Natural killer cell (primary cell): ENCODE measurements at regions of chr2 and their contacts with region 1.

Region 1: DNA sequence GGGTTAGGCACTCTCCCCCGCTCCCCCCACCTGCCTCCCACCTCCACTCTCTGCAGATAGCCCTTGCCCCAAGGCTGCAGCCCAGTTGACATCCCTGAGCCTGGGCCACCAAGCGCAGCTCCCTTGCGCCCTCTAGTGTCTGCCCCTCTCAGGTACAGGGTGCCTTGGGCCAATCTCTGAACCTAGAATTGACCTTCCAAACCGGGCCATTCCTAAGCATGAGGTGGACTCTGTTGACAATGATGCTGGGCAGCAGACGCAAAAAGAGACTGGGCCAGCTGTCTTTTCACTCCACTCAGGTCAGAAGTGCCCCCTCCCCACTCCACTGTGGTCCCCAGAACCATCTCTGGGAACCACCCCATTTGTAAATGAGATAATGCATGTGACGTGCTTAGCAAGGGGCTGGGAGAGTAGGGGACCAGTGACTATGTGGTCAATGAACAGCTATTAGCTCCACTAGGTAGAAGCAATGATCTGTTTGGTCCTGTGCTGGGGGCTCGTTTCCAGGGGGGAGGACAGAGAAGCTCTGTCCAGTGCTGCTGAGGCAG is 43.3 kb upstream of the PLB1 start:
- DNase-seq: peak; percentile 80 to 86
- ATAC-seq: peak; percentile 85 to 98 (median 96)
- H3K4me3 ChIP-seq: no peak overlapping the region
- H3K4me3 Mint-ChIP-seq: no peak overlapping the region
- H3K27ac ChIP-seq: no peak overlapping the region
- H3K27ac Mint-ChIP-seq: peak overlapping the region in 1 of 2 donors; percentile 45
- H3K4me1 ChIP-seq: peaks cover 26% of the 10 kb centered on the region
- H3K4me1 Mint-ChIP-seq: peaks cover 14 to 30% of the 10 kb centered on the region in 2 donors
- H3K27me3 ChIP-seq: no peaks in the 10 kb centered on the region
- H3K27me3 Mint-ChIP-seq: peaks cover 0 to under 1% of the 10 kb centered on the region in 2 donors
- CTCF ChIP-seq: peak; percentile 92

Region 2: GRCh38 chr2:27703638-27704341 is 748.8 kb before region 1 on chr2:
- intact Hi-C with region 1: loop called (anchors 1 kb)
- DNase-seq: peak; percentile 73 to 92
- ATAC-seq: peak; percentile 91 to 98 (median 95)
- H3K4me3 ChIP-seq: no peak overlapping the region
- H3K4me3 Mint-ChIP-seq: no peak overlapping the region
- H3K27ac ChIP-seq: no peak overlapping the region
- H3K27ac Mint-ChIP-seq: no peak overlapping the region
- H3K4me1 ChIP-seq: peaks cover 6% of the 10 kb centered on the region
- H3K4me1 Mint-ChIP-seq: peaks cover 0 to 9% of the 10 kb centered on the region in 2 donors
- H3K27me3 ChIP-seq: no peaks in the 10 kb centered on the region
- H3K27me3 Mint-ChIP-seq: no peaks in the 10 kb centered on the region
- CTCF ChIP-seq: peak; percentile 95

Region 3: GRCh38 chr2:27754138-27754588 is 698.4 kb before region 1 on chr2:
- intact Hi-C with region 1: loop called (anchors 1 kb)
- DNase-seq: peak; percentile 43 to 73
- ATAC-seq: peak; percentile 80 to 85 (median 83)
- H3K4me3 ChIP-seq: no peak overlapping the region
- H3K4me3 Mint-ChIP-seq: no peak overlapping the region
- H3K27ac ChIP-seq: no peak overlapping the region
- H3K27ac Mint-ChIP-seq: no peak overlapping the region
- H3K4me1 ChIP-seq: no peaks in the 10 kb centered on the region
- H3K4me1 Mint-ChIP-seq: no peaks in the 10 kb centered on the region
- H3K27me3 ChIP-seq: no peaks in the 10 kb centered on the region
- H3K27me3 Mint-ChIP-seq: peaks cover 0 to 6% of the 10 kb centered on the region in 2 donors
- CTCF ChIP-seq: peak; percentile 51

Region 4: DNA sequence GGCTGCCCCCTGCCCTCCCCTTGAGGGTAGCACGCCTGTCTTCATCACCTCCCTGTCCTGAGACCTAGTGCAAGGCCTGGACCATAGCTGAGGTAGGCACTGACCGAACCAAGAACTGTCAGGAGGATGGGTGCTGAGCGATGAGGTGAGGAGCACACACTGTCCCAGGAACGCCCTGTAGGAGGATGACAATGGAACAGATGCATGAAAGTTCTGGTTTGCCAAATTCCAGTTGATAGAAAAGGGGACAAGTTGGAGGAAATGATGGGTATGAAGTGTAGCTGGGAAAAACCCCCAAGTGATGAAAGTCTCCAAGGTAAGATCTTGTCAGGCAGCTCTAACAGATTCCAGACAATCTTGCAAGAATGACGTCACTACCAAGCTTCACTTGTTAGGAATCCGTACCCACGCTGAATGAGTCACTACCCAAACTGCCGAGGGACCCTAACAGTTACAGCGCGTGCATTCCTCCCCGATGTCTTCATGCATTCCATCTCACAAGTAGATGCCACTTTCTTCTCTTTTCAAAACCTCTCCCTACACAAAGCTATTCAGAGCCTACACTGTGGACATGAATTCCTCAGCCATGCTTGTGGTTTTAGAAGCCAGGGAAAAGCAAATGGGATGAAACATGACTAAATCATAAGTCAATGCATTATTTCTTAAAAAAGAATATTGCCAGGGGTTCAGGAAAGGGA is 653.5 kb before region 1 on chr2:
- intact Hi-C with region 1: no loop called
- DNase-seq: no peak
- ATAC-seq: no peak
- H3K4me3 ChIP-seq: no peak overlapping the region
- H3K4me3 Mint-ChIP-seq: no peak overlapping the region
- H3K27ac ChIP-seq: no peak overlapping the region
- H3K27ac Mint-ChIP-seq: no peak overlapping the region
- H3K4me1 ChIP-seq: no peaks in the 10 kb centered on the region
- H3K4me1 Mint-ChIP-seq: peaks cover 0 to 12% of the 10 kb centered on the region in 2 donors
- H3K27me3 ChIP-seq: no peaks in the 10 kb centered on the region
- H3K27me3 Mint-ChIP-seq: no peaks in the 10 kb centered on the region
- CTCF ChIP-seq: no peak

Region 5: GRCh38 chr2:28276076-28276618 is 176.5 kb before region 1 on chr2:
- intact Hi-C with region 1: loop called (anchors 10 kb)
- DNase-seq: no peak
- ATAC-seq: no peak
- H3K4me3 ChIP-seq: no peak overlapping the region
- H3K4me3 Mint-ChIP-seq: no peak overlapping the region
- H3K27ac ChIP-seq: no peak overlapping the region
- H3K27ac Mint-ChIP-seq: no peak overlapping the region
- H3K4me1 ChIP-seq: peaks cover 25% of the 10 kb centered on the region
- H3K4me1 Mint-ChIP-seq: peaks cover 22 to 34% of the 10 kb centered on the region in 2 donors
- H3K27me3 ChIP-seq: no peaks in the 10 kb centered on the region
- H3K27me3 Mint-ChIP-seq: no peaks in the 10 kb centered on the region
- CTCF ChIP-seq: no peak